PC-3 (cell line): ENCODE measurements at regions of chrX and their contacts with region 1.

Region 1: DNA sequence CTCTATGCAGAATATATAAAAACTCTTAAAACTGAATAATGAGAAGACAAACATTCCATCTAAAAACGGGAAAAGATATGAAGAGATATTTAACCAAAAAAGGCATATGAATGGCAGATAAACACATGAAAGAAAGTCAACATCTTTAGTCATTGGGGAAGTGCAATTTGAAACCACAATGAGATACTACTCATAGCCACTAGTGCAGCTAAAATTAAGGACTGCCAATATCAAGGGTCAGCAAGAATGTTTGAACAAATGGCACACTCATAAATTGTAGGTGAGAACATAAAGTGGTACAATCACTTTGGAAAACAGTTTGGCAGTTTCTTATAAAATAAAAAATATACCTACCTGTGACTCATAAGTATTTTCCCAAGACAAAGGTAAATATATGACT is 534.9 kb upstream of the DIPK2B start:
- DNase-seq: peak; percentile 91
- ATAC-seq: peak; percentile 91
- H3K4me3 ChIP-seq: no peak overlapping the region
- H3K27ac ChIP-seq: peak overlapping the region; percentile 95
- H3K4me1 ChIP-seq: peaks cover 15% of the 10 kb centered on the region
- H3K27me3 ChIP-seq: no peaks in the 10 kb centered on the region
- CTCF ChIP-seq: no peak

Region 2: GRCh38 chrX:45445745-45446412 is 289.7 kb before region 1 on chrX:
- CTCF ChIA-PET with region 1: no interaction called
- POLR2A ChIA-PET with region 1: interaction called, 12 read pairs
- intact Hi-C with region 1: no loop called
- DNase-seq: peak; percentile 92
- ATAC-seq: peak; percentile 87
- H3K4me3 ChIP-seq: no peak overlapping the region
- H3K27ac ChIP-seq: peak overlapping the region; percentile 98
- H3K4me1 ChIP-seq: peaks cover 59% of the 10 kb centered on the region
- H3K27me3 ChIP-seq: no peaks in the 10 kb centered on the region
- CTCF ChIP-seq: no peak

Region 3: GRCh38 chrX:45592101-45592500 is 143.5 kb before region 1 on chrX:
- CTCF ChIA-PET with region 1: no interaction called
- POLR2A ChIA-PET with region 1: interaction called, 10 read pairs
- intact Hi-C with region 1: no loop called
- DNase-seq: no peak
- ATAC-seq: no peak
- H3K4me3 ChIP-seq: no peak overlapping the region
- H3K27ac ChIP-seq: no peak overlapping the region
- H3K4me1 ChIP-seq: no peaks in the 10 kb centered on the region
- H3K27me3 ChIP-seq: no peaks in the 10 kb centered on the region
- CTCF ChIP-seq: no peak

Region 4: GRCh38 chrX:45621376-45622041 is 114.1 kb before region 1 on chrX:
- CTCF ChIA-PET with region 1: no interaction called
- POLR2A ChIA-PET with region 1: interaction called, 11 read pairs
- intact Hi-C with region 1: no loop called
- DNase-seq: peak; percentile 78
- ATAC-seq: peak; percentile 85
- H3K4me3 ChIP-seq: no peak overlapping the region
- H3K27ac ChIP-seq: peak overlapping the region; percentile 79
- H3K4me1 ChIP-seq: peaks cover 26% of the 10 kb centered on the region
- H3K27me3 ChIP-seq: no peaks in the 10 kb centered on the region
- CTCF ChIP-seq: no peak

Region 5: GRCh38 chrX:45715748-45716147 is 19.8 kb before region 1 on chrX:
- CTCF ChIA-PET with region 1: no interaction called
- POLR2A ChIA-PET with region 1: interaction called, 21 read pairs
- intact Hi-C with region 1: loop called (anchors 1 kb)
- DNase-seq: peak; percentile 72
- ATAC-seq: peak; percentile 17
- H3K4me3 ChIP-seq: no peak overlapping the region
- H3K27ac ChIP-seq: peak overlapping the region; percentile 100
- H3K4me1 ChIP-seq: peaks cover 94% of the 10 kb centered on the region
- H3K27me3 ChIP-seq: no peaks in the 10 kb centered on the region
- CTCF ChIP-seq: no peak